Mucosa of descending colon (tissue), 3 donors: ENCODE measurements at regions of chr21 and their contacts with region 1.

Region 1: DNA sequence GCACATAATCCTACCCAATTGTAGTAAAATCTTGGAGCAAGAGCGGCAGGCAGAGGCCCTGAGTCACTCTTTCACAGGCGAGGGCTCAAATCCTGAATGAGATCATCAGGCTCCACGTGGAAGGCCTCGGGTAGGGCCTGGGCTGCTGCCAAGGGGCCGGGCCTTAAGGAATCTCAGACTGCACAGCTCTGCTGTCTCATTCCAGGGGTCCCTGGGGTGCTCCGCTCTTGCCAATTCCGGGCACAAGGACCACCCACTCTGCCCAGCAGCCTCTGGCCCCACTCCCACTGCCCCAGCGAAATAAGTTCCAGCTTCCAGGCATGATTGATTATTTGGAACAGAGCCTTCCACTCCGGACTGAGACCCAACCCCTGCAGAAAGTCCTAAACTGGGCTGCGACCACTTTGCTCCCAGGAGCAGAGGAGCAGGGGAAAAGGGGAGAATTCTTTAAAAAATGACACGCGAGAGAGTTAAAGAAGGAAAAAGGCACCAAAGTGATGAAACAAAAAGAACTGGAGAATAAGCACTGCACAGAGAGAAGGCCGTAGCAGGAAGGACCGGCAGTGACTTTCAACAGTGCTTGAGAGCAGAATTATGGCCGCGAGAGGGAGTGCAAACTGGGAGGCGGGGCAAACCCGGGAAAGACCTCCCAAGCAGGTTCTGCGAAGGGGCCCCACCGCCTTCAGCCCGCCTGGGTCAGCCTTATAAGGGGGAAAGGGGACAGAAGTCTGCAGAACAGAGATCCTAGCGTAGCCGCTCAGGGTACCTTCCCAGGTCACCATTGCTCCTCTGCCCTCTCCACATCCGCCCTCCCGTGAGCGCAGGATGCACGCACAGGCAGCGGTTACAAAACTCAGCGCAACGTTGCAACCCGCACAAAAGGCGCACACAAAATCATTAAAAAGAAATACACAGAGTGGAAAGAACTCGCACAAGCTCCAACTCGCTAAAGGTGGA is 2.0 kb downstream of the ADAMTS1 start:
- DNase-seq: peak; percentile 86 to 90 (median 88)
- ATAC-seq: peak; percentile 82
- H3K4me3 ChIP-seq: peak overlapping the region; percentile 30
- H3K4me1 ChIP-seq: peaks cover 33% of the 10 kb centered on the region
- CTCF ChIP-seq: no peak

Region 2: GRCh38 chr21:28745131-28746016 is 1902.1 kb after region 1 on chr21:
- intact Hi-C with region 1: loop called in 1 of 2 experiments (anchors 10 kb)
- DNase-seq: peak in 2 of 3 donors; percentile 67 to 75
- ATAC-seq: peak; percentile 93
- H3K4me3 ChIP-seq: no peak overlapping the region
- H3K4me1 ChIP-seq: peaks cover 4% of the 10 kb centered on the region
- CTCF ChIP-seq: peak; percentile 87